Activated CD4-positive, alpha-beta T cell treated with anti-CD3 and anti-CD28 coated beads, Interleukin-2, amount 10 ng/mL, durations not matched to agents 7 days and 5 days (primary cell): ENCODE measurements at regions of chr2 and their contacts with region 1.

Region 1: GRCh38 chr2:112658820-112659667 is 13.3 kb downstream of the SLC20A1 start:
- DNase-seq: no peak
- H3K4me3 Mint-ChIP-seq: no peak overlapping the region
- H3K27ac Mint-ChIP-seq: peak overlapping the region; percentile 60
- H3K4me1 Mint-ChIP-seq: peaks cover 66% of the 10 kb centered on the region
- H3K27me3 Mint-ChIP-seq: no peaks in the 10 kb centered on the region

Region 2: GRCh38 chr2:112645310-112646101 is 13.5 kb before region 1 on chr2 and contains the start of gene SLC20A1:
- CTCF ChIA-PET with region 1: interaction called, 12 read pairs
- POLR2A ChIA-PET with region 1: no interaction called
- DNase-seq: peak; percentile 97
- H3K4me3 Mint-ChIP-seq: peak within 1 kb of the TSS; percentile 99
- H3K27ac Mint-ChIP-seq: peak within 1 kb of the TSS; percentile 91
- H3K4me1 Mint-ChIP-seq: peaks cover 66% of the 10 kb centered on the region
- H3K27me3 Mint-ChIP-seq: no peaks in the 10 kb centered on the region
- total RNA-seq, gene SLC20A1: 165 to 167 TPM